ENCODE measurements at regions of chr1 and their contacts with region 1.

Region 1: DNA sequence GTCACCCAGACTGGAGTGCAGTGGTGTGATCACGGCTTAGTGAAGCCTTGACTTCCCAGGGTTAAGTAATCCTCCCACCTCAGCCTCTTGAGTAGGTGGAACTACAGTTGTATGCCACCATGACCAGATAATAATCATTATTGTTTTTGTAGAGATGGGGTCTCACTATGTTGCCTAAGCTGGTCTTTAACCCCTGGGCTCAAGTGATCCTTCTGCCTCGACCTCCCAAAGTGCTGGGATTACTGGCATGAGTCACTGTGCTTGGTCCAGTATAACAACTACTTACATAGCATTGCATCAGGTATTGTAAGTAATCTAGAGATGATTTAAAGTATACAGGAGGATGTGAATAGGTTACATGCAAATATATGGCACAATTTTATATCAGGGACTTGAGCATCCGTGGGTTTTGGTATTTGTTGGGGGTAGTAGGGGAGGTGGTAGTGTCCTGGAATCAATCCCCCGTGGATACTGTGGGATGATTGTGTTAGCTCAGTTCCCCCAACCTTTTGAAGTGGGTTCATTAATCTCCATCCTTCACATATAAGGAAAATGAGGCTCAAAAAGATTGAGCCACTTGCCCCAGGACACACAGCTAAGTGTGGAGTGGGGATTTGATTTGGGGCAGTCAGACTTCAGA is 61.4 kb upstream of the CNIH3 start:
- DNase-seq: no peak
- H3K4me3 ChIP-seq: no peak overlapping the region
- H3K27ac ChIP-seq: no peak overlapping the region
- H3K4me1 ChIP-seq: no peaks in the 10 kb centered on the region
- H3K27me3 ChIP-seq: no peaks in the 10 kb centered on the region
- CTCF ChIP-seq: no peak
- POLR2A ChIP-seq: no peak

Region 2: GRCh38 chr1:224587051-224587450 is 32.3 kb after region 1 on chr1:
- intact Hi-C with region 1: loop called (anchors 2 kb)
- DNase-seq: no peak
- H3K4me3 ChIP-seq: no peak overlapping the region
- H3K27ac ChIP-seq: no peak overlapping the region
- H3K4me1 ChIP-seq: no peaks in the 10 kb centered on the region
- H3K27me3 ChIP-seq: no peaks in the 10 kb centered on the region
- CTCF ChIP-seq: no peak
- POLR2A ChIP-seq: no peak